Caco-2 (cell line): ENCODE measurements at regions of chr1 and their contacts with region 1.

Region 1: GRCh38 chr1:201361652-201362504 is 15.6 kb downstream of the TNNT2 start:
- DNase-seq: peak; percentile 57 to 69
- H3K4me3 ChIP-seq: no peak overlapping the region
- H3K4me3 Mint-ChIP-seq: no peak overlapping the region
- H3K27ac Mint-ChIP-seq: no peak overlapping the region
- H3K4me1 ChIP-seq: no peaks in the 10 kb centered on the region
- H3K4me1 Mint-ChIP-seq: no peaks in the 10 kb centered on the region
- H3K27me3 ChIP-seq: no peaks in the 10 kb centered on the region
- H3K27me3 Mint-ChIP-seq: peaks cover 7% of the 10 kb centered on the region
- CTCF ChIP-seq: peak; percentile 87 to 92

Region 2: DNA sequence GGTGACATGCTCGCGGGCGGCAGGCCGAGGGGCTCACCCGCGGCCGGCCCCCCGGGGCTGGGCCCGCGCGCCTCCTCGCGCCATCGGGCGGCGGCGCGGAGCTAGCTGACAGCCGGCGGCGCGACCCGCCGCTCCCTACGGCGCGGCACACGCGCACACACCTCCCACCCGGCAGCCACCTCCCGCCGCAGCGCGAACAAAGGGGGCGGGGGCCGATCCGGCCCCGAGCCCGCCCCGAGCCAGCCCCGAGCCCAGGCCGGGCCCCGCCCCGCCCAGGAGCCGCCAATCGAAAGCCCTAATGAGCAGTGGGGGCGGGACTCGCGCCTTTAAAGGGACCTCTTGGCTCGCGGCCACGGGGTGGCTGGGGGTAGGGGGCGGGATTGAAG is 338.4 kb before region 1 on chr1 and contains the start of gene KIF21B:
- CTCF ChIA-PET with region 1: interaction called, 13 read pairs
- POLR2A ChIA-PET with region 1: no interaction called
- intact Hi-C with region 1: no loop called
- DNase-seq: peak; percentile 87 to 94
- H3K4me3 ChIP-seq: peak within 1 kb of the TSS; percentile 63
- H3K4me3 Mint-ChIP-seq: peak within 1 kb of the TSS; percentile 66
- H3K27ac Mint-ChIP-seq: no peak within 1 kb of the TSS
- H3K4me1 ChIP-seq: peaks cover 21% of the 10 kb centered on the region
- H3K4me1 Mint-ChIP-seq: peaks cover 25% of the 10 kb centered on the region
- H3K27me3 ChIP-seq: no peaks in the 10 kb centered on the region; the same call in 1 of the 2 replicates
- H3K27me3 Mint-ChIP-seq: peaks cover 3% of the 10 kb centered on the region
- CTCF ChIP-seq: no peak
- total RNA-seq, gene KIF21B: 2.4 and 2.6 TPM in 2 replicates

Region 3: DNA sequence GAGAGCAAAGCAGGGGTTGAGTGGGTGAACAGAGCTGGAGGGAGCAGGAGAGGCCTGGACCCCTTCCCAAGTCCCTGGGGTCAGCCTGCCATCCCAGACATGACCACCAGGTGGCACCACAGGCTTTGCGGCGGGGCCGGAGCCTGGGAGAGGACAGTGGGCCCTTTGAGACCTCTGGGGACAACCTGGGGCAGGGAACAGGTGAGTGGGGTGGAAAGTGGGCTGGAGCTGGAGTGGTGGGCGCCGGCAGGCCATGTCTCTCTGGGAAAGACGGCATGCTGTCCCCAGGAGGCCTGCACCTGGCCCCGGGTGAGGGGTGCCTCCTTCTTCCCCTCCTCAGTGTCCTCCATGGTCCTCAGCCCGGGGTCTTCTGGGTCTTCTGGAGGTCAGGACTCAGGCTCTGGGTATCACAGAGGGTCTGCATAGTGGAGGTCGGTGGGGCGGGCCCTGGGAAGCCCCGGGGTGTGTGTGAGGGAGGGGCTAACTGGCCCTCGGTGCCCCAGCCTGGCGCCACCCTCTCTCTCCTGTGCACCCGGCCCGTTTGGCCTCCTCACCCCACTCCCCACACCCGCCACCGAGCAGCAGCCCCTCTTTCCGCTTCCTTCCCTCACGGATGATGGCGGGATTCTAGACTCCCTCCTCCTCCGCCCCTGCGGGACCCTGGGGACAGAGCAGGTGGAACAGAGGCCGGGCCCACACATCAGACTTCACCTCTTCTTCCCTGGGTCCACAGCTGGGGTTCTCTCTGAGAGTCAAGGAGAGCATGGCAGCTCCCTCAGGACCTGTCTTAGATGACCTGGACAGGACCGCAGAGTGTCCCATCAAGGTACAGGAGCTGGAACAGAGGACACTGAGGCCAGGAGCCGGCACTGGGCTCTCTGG is 107.0 kb before region 1 on chr1:
- CTCF ChIA-PET with region 1: interaction called, 25 read pairs
- POLR2A ChIA-PET with region 1: no interaction called
- intact Hi-C with region 1: loop called (anchors 1 kb)
- DNase-seq: peak; percentile 73 to 88
- H3K4me3 ChIP-seq: no peak overlapping the region
- H3K4me3 Mint-ChIP-seq: no peak overlapping the region
- H3K27ac Mint-ChIP-seq: no peak overlapping the region
- H3K4me1 ChIP-seq: no peaks in the 10 kb centered on the region
- H3K4me1 Mint-ChIP-seq: no peaks in the 10 kb centered on the region
- H3K27me3 ChIP-seq: no peaks in the 10 kb centered on the region; the same call in 1 of the 2 replicates
- H3K27me3 Mint-ChIP-seq: peaks cover 6% of the 10 kb centered on the region
- CTCF ChIP-seq: peak; percentile 97

Region 4: DNA sequence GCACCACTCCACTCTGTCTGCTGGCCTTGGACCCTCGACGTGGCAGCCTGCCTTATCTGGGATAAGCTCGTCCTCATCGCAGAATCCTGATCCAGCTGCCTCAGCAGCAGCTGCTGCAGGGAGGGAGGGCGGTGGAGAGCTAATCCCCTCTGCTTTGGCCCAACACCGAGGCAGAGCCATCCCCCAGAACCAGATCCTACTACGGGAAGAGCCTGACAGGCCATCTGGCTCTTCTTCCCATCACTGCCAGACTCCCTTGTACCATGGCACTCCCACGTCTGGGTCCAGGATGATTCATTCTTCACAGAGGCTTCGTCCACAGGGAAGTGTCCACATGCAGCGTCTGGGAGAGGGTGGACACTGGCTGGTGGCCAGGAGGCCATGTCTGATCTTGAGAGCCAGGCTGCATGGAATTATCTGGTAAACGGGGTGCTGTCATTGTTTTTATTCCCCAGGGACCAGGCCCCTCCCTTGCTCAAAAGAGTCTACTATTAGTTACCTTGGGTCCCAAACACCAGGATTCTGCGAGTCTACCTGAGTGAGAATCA is 93.2 kb before region 1 on chr1:
- CTCF ChIA-PET with region 1: interaction called, 4 read pairs
- POLR2A ChIA-PET with region 1: no interaction called
- intact Hi-C with region 1: loop called (anchors 5 kb)
- DNase-seq: no peak
- H3K4me3 ChIP-seq: no peak overlapping the region
- H3K4me3 Mint-ChIP-seq: no peak overlapping the region
- H3K27ac Mint-ChIP-seq: no peak overlapping the region
- H3K4me1 ChIP-seq: no peaks in the 10 kb centered on the region
- H3K4me1 Mint-ChIP-seq: no peaks in the 10 kb centered on the region
- H3K27me3 ChIP-seq: no peaks in the 10 kb centered on the region; the same call in none of the 2 replicates
- H3K27me3 Mint-ChIP-seq: peaks cover 24% of the 10 kb centered on the region
- CTCF ChIP-seq: no peak

Region 5: GRCh38 chr1:201309426-201309825 is 52.5 kb before region 1 on chr1:
- CTCF ChIA-PET with region 1: interaction called, 12 read pairs
- POLR2A ChIA-PET with region 1: no interaction called
- intact Hi-C with region 1: loop called (anchors 1 kb)
- DNase-seq: peak; percentile 84
- H3K4me3 ChIP-seq: no peak overlapping the region
- H3K4me3 Mint-ChIP-seq: no peak overlapping the region
- H3K27ac Mint-ChIP-seq: no peak overlapping the region
- H3K4me1 ChIP-seq: peaks cover 27% of the 10 kb centered on the region
- H3K4me1 Mint-ChIP-seq: peaks cover 8% of the 10 kb centered on the region
- H3K27me3 ChIP-seq: no peaks in the 10 kb centered on the region
- H3K27me3 Mint-ChIP-seq: peaks cover 5% of the 10 kb centered on the region
- CTCF ChIP-seq: peak; percentile 26 to 70

Region 6: GRCh38 chr1:201348211-201348566 is 13.7 kb before region 1 on chr1:
- CTCF ChIA-PET with region 1: interaction called, 13 read pairs
- POLR2A ChIA-PET with region 1: no interaction called
- intact Hi-C with region 1: loop called (anchors 1 kb)
- DNase-seq: peak; percentile 60 to 73
- H3K4me3 ChIP-seq: no peak overlapping the region
- H3K4me3 Mint-ChIP-seq: no peak overlapping the region
- H3K27ac Mint-ChIP-seq: no peak overlapping the region
- H3K4me1 ChIP-seq: no peaks in the 10 kb centered on the region
- H3K4me1 Mint-ChIP-seq: no peaks in the 10 kb centered on the region
- H3K27me3 ChIP-seq: no peaks in the 10 kb centered on the region; the same call in 1 of the 2 replicates
- H3K27me3 Mint-ChIP-seq: peaks cover 16% of the 10 kb centered on the region
- CTCF ChIP-seq: peak; percentile 42 to 74